AG04449 (cell line): ENCODE measurements at regions of chr15 and their contacts with region 1.

Region 1: DNA sequence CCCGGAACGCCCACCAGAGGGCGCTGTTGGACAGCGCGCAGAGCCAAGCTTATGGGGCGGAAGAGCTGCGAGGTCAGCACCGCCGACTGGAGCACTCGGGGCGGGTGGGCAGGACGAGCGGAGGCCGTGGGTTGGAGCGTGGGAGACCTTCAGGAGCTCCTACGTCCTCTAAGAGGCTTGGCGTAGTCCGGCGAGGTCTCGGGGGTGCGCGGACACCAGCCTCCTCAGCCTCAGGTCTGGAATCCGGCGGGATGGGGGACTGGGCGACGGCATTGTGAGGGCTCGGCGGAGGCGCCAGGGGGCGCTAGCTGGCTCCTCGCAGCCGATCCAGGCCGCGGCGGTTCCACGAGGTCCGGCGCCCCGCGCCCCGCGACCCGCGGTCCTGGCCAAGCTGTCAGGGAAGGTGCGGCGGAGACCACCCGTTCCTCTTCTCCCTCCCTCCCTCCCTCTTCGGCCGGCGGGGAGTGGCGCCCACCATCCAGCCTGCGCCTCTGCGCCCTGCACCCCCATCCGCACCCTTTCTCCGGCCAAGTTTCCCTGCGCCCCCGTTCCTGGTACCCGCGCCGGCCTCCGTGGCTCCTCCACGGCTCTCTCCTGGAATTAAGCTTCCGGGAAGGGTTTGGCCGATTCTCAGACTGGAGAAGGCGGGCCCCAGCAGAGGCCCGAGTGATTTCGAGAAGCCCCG is 24.3 kb upstream of the POLG start:
- DNase-seq: no peak
- H3K4me3 ChIP-seq: peak overlapping the region; percentile 64
- CTCF ChIP-seq: peak; percentile 96

Region 2: DNA sequence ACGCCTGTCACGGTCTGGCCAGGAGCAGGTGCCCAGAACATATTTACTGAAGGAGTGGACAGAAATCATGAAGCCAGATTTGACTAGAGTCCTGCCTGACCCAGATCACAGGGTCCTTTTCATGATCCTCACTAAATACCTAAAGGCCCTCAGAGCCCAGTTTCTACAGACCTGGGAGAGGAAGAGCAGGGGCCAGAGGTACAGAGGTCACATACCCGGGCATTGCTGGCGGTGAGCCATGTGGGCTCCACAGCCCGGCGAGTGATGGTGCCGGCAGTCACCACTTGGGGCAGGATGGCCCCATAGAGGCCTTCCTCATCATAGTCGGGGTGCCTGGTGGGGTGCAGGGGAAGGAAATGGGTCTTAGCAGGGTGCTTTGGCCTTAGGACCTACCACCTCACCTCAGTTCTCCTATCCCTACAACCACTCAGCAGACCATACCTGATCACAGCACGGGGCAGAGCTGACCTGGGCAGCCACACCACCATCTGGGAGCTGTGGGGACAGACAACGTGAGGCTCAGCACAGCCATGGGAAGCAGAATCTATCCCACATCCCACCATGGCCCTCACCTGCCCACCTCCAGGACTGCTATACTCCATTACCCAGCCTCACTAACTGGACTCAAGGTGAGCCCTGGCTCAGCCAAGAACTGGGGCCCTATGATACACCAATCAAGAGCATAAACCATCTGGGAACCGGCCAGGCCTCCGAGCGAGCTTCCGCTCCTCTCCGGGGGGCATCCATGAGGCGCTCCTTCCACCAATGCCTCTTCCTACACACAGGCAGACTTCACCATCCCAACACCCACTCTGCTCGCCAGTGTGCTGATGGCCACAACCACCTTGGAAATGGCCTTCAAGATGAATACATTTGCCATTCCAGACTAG is 37.1 kb before region 1 on chr15:
- CTCF ChIA-PET with region 1: interaction called, 10 read pairs
- POLR2A ChIA-PET with region 1: no interaction called
- DNase-seq: no peak
- H3K4me3 ChIP-seq: no peak overlapping the region
- CTCF ChIP-seq: no peak

Region 3: GRCh38 chr15:89399238-89400120 is 40.6 kb after region 1 on chr15:
- CTCF ChIA-PET with region 1: interaction called, 243 read pairs
- POLR2A ChIA-PET with region 1: no interaction called
- DNase-seq: no peak
- H3K4me3 ChIP-seq: no peak overlapping the region
- CTCF ChIP-seq: peak; percentile 11

Region 4: DNA sequence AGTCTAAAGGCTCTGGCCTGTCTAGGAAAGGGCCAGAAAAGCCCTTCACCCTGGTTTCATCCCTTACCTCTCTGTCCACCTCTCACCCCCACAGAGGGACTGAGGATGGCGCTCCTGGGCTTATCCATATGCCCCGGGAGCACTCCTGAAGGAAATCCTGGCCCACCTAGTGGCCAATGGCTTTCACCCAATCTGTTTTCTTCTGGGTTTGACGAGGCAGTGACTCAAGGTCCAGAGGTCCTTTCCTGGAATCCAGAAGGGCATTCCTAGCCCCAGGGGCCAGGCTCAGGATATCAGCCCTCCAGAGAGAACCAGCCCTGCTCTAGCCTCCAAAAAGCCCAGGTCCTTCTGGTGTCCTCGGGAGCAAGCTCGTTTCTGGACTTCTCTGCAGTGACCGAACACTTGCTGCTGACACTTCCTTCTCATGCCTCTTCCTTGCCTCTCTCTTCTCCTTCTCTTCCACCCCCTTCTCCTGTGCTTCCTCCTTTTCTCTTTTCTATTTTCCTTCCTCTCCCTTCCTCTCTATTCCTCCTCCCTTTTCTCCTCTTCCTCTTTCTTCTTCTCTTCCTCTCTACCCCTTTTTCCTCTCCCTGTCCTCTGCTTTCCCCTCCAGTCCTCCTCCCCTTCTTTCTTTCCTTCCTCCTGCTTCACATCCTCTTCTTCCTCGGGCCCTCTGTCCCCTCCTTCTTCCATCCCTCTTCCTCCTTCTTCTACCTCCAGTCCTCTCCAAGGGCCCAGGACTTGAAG is 77.8 kb after region 1 on chr15:
- CTCF ChIA-PET with region 1: interaction called, 446 read pairs
- POLR2A ChIA-PET with region 1: no interaction called
- DNase-seq: no peak
- H3K4me3 ChIP-seq: no peak overlapping the region
- CTCF ChIP-seq: no peak

Region 5: GRCh38 chr15:89472785-89473256 is 113.9 kb after region 1 on chr15:
- CTCF ChIA-PET with region 1: interaction called, 156 read pairs
- POLR2A ChIA-PET with region 1: interaction called, 3 read pairs
- DNase-seq: no peak
- H3K4me3 ChIP-seq: no peak overlapping the region
- CTCF ChIP-seq: peak; percentile 88

Region 6: GRCh38 chr15:89556413-89557262 is 197.7 kb after region 1 on chr15:
- CTCF ChIA-PET with region 1: interaction called, 22 read pairs
- POLR2A ChIA-PET with region 1: no interaction called
- DNase-seq: peak; percentile 24
- H3K4me3 ChIP-seq: no peak overlapping the region
- CTCF ChIP-seq: peak; percentile 74

Region 7: GRCh38 chr15:90106522-90107117 is 747.7 kb after region 1 on chr15:
- CTCF ChIA-PET with region 1: no interaction called
- POLR2A ChIA-PET with region 1: no interaction called
- DNase-seq: no peak
- H3K4me3 ChIP-seq: no peak overlapping the region
- CTCF ChIP-seq: no peak